ENCODE measurements at regions of chr18 and their contacts with region 1.

Region 1: GRCh38 chr18:21179590-21180220 is 62.3 kb upstream of the GREB1L start:
- DNase-seq: no peak
- ATAC-seq: peak; percentile 57
- H3K4me3 Mint-ChIP-seq: no peak overlapping the region
- H3K27ac Mint-ChIP-seq: no peak overlapping the region
- H3K4me1 Mint-ChIP-seq: no peaks in the 10 kb centered on the region
- H3K27me3 Mint-ChIP-seq: no peaks in the 10 kb centered on the region
- CTCF ChIP-seq: no peak

Region 2: GRCh38 chr18:20971886-20972267 is 207.8 kb before region 1 on chr18:
- CTCF ChIA-PET with region 1: interaction called, 3 read pairs
- POLR2A ChIA-PET with region 1: no interaction called
- intact Hi-C with region 1: loop called (anchors 1 kb)
- DNase-seq: no peak
- ATAC-seq: peak; percentile 47
- H3K4me3 Mint-ChIP-seq: no peak overlapping the region
- H3K27ac Mint-ChIP-seq: no peak overlapping the region
- H3K4me1 Mint-ChIP-seq: no peaks in the 10 kb centered on the region
- H3K27me3 Mint-ChIP-seq: no peaks in the 10 kb centered on the region
- CTCF ChIP-seq: no peak

Region 3: GRCh38 chr18:21123290-21123926 is 56.3 kb before region 1 on chr18:
- CTCF ChIA-PET with region 1: no interaction called
- POLR2A ChIA-PET with region 1: no interaction called
- intact Hi-C with region 1: loop called (anchors 5 kb)
- DNase-seq: no peak
- ATAC-seq: no peak
- H3K4me3 Mint-ChIP-seq: no peak overlapping the region
- H3K27ac Mint-ChIP-seq: no peak overlapping the region
- H3K4me1 Mint-ChIP-seq: no peaks in the 10 kb centered on the region
- H3K27me3 Mint-ChIP-seq: no peaks in the 10 kb centered on the region
- CTCF ChIP-seq: no peak

Measured in activated B cell treated with CpG ODN at 0.5 μM for 24 hours (primary cell).